ENCODE measurements at regions of chr15 and their contacts with region 1.

Region 1: GRCh38 chr15:99273801-99274200 is 22.5 kb downstream of the LRRC28 start:
- DNase-seq: no peak
- ATAC-seq: no peak
- H3K4me3 ChIP-seq: no peak overlapping the region
- H3K27ac ChIP-seq: no peak overlapping the region
- H3K4me1 ChIP-seq: peaks cover under 1% of the 10 kb centered on the region; the same call in 1 of the 2 replicates
- H3K27me3 ChIP-seq: no peaks in the 10 kb centered on the region
- CTCF ChIP-seq: no peak
- EP300 ChIP-seq: no peak
- POLR2A ChIP-seq: no peak
- RAD21 ChIP-seq: no peak

Region 2: GRCh38 chr15:98983333-98983732 is 290.5 kb before region 1 on chr15:
- CTCF ChIA-PET with region 1: no interaction called
- POLR2A ChIA-PET with region 1: no interaction called
- in situ Hi-C with region 1: no loop called
- intact Hi-C with region 1: no loop called
- DNase-seq: no peak
- ATAC-seq: no peak
- H3K4me3 ChIP-seq: no peak overlapping the region
- H3K27ac ChIP-seq: no peak overlapping the region
- H3K4me1 ChIP-seq: 0 out of 2 replicates have a peak, but pooled peaks cover 9% of the 10 kb centered on the region
- H3K27me3 ChIP-seq: no peaks in the 10 kb centered on the region
- CTCF ChIP-seq: no peak
- EP300 ChIP-seq: no peak
- POLR2A ChIP-seq: no peak
- RAD21 ChIP-seq: no peak

Region 3: DNA sequence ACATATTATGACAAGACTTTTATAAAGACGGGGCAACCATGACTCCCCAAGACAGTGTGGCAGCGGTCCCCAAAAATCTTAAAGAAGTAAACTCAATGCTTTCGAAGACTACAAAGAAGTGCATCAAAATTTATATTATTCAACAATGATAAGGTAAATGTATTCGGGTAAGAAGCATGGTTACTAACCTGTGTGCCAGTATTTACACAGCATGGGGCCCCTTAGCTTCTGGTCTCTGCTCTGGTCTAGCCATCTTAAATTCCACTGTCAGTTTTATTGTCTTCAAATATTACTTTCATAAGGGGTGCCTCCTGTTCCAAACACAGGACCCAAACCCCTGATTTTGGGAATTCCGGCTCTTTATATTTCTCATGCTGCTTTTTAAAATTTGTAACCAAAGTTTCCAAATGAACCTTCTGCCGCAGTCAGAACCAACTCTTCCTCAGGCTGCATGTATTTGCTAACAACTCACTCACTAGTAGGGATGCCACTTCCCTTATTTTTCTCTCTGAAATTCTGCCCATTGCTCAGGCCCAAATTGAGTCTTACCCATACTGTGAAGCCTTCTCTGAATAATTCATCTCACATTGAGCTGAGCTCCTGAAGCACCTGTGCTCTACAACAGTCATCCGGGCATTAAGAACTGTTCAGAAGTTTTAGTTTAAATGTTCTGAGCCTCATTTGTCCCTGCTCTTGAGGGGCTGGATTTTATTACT is 25.6 kb before region 1 on chr15:
- CTCF ChIA-PET with region 1: no interaction called
- POLR2A ChIA-PET with region 1: no interaction called
- in situ Hi-C with region 1: no loop called
- intact Hi-C with region 1: no loop called
- DNase-seq: no peak
- ATAC-seq: no peak
- H3K4me3 ChIP-seq: peak overlapping the region; percentile 72 to 97 (median 78); a peak in 5 of 6 replicates
- H3K27ac ChIP-seq: peak overlapping the region; percentile 7
- H3K4me1 ChIP-seq: peaks cover 27% of the 10 kb centered on the region
- H3K27me3 ChIP-seq: no peaks in the 10 kb centered on the region; a peak in 1 of 5 replicates
- CTCF ChIP-seq: no peak
- EP300 ChIP-seq: no peak
- POLR2A ChIP-seq: no peak
- RAD21 ChIP-seq: no peak

Region 4: DNA sequence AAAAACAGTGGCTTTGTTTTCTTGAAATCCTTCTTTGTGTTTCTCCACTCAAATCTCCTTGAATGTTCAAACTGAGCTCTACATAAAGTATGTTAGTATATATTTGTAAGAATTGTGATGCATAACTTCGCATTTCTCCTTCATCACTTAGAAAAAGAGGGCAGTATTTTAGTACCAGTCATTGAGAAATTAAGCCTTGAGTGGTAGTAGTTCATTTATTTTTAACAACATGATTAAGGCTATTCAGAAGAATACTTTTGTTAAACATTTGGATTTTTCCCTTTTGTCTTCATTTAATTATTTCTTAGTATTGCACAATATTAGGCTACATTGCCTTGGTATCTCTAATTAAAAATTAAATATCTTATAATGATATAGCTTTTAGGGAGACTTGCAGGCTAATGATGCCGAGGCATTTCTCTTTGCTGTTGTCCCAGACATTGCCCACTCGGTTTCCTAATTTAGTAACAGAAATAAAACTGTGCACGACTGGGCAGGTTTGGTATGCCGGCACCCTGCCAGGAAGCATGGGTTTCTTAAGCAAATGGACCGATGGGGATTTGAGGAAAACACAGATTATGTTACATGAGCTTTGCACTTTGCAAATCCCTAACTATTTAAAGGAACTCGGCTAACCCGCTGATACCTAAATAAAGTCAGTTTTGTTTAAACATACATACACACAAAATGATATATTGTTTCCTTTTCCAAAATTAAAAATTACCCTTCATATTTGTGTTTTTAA is 32.1 kb after region 1 on chr15:
- CTCF ChIA-PET with region 1: no interaction called
- POLR2A ChIA-PET with region 1: no interaction called
- in situ Hi-C with region 1: no loop called
- intact Hi-C with region 1: no loop called
- DNase-seq: peak; percentile 82
- ATAC-seq: peak; percentile 67
- H3K4me3 ChIP-seq: peak overlapping the region in 2 of 3 experiments; percentile 16 to 24; a peak in 1 of 6 replicates
- H3K27ac ChIP-seq: peak overlapping the region; percentile 52
- H3K4me1 ChIP-seq: peaks cover 39% of the 10 kb centered on the region
- H3K27me3 ChIP-seq: no peaks in the 10 kb centered on the region
- CTCF ChIP-seq: no peak
- EP300 ChIP-seq: peak in 1 of 2 experiments; percentile 20; a peak in 1 of 4 replicates
- POLR2A ChIP-seq: no peak
- RAD21 ChIP-seq: no peak

Region 5: GRCh38 chr15:99466701-99467337 is 193.0 kb after region 1 on chr15:
- CTCF ChIA-PET with region 1: no interaction called
- POLR2A ChIA-PET with region 1: no interaction called
- in situ Hi-C with region 1: no loop called
- intact Hi-C with region 1: no loop called
- DNase-seq: no peak
- ATAC-seq: peak; percentile 63
- H3K4me3 ChIP-seq: no peak overlapping the region
- H3K27ac ChIP-seq: no peak overlapping the region
- H3K4me1 ChIP-seq: peaks cover 7% of the 10 kb centered on the region; the same call in 1 of the 2 replicates
- H3K27me3 ChIP-seq: no peaks in the 10 kb centered on the region
- CTCF ChIP-seq: no peak
- EP300 ChIP-seq: no peak
- POLR2A ChIP-seq: no peak
- RAD21 ChIP-seq: no peak

Region 6: DNA sequence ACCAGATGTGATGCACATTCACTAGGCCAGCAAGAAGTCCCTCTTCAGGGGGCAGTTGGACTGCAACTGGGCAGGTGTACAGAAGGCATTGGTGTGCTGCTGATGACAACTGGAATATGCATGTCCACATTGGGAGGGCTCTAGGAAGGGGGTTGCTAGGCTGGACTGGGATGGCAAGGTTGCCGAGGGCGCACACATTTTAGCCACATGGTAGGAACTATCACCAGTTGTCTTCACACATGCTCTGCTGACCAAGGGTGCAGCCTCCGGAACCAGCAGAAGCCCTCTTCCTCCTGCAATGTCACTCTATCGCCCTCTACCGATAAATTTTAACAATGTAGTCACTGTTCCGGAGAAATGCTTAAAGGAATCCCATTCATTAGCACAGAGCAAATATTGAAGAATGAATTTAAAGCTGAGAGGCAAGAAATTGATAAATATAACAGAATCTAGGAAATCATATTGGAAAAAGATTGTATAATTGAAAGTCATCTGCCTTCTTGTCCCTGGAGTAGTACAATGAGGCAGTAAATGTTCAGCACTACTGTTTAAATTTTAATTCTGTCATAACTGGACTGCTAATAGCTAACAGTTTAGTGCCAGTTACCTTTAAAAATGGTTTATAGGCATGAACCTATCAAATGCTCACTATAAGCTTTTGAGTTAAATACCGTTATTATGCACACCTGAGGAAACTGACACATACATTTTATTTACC is 482.1 kb after region 1 on chr15:
- CTCF ChIA-PET with region 1: no interaction called
- POLR2A ChIA-PET with region 1: no interaction called
- in situ Hi-C with region 1: no loop called
- intact Hi-C with region 1: loop called (anchors 1 kb)
- DNase-seq: peak; percentile 74
- ATAC-seq: peak; percentile 91
- H3K4me3 ChIP-seq: no peak overlapping the region
- H3K27ac ChIP-seq: no peak overlapping the region
- H3K4me1 ChIP-seq: peaks cover 26% of the 10 kb centered on the region
- H3K27me3 ChIP-seq: peaks cover 0 to 3% of the 10 kb centered on the region in 2 experiments; a peak in 1 of 5 replicates
- CTCF ChIP-seq: peak; percentile 88
- EP300 ChIP-seq: no peak
- POLR2A ChIP-seq: no peak
- RAD21 ChIP-seq: peak; percentile 67; the same call in 1 of the 2 replicates